B cell (primary cell): ENCODE measurements at regions of chr22 and their contacts with region 1.

Region 1: DNA sequence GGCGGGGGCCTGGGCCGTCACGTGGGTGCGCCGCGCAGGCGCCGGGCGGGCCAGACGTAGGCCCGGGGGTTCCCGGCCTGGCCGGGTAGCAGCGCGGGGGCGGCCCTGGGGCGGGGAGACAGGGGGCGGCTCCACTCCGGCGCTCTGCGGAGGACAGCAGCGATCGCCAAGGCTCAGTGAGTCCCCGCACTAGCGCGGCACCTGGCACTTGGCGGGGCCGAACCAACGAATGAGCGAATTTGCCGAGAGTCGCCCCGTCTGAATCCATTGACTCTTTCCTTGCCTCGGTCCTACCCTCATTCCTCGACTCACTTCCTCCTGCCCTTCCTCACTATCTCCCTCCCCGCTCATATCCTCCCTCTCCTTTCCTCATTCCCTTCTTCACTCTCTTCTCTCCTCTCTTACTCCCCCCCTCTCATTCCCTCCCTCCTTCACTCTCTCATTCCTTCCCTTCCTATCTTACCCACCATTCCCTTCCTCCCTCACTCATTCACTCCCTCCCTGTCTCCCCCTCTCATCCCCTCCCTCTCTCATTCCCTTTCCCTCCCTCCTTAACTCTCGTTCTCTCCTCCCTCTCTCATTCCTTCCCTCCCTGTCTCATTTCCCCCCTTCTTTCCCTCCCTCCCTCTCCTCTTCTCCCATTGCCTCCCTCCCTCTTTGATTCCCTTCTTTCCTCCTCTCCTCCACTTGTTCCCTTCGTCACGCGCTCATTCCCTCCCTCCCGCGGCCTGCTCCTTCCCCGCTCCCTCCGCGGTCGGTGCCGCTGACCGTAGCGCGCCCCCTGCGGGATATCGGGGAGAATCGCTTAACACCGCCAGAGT is 476 bp upstream of the KLHL22 start:
- DNase-seq: peak; percentile 96
- ATAC-seq: peak; percentile 96
- H3K4me3 ChIP-seq: peak overlapping the region; percentile 75 to 85 (median 76)
- H3K4me3 Mint-ChIP-seq: peak overlapping the region; percentile 97
- H3K27ac ChIP-seq: peak overlapping the region; percentile 96 to 98
- H3K27ac Mint-ChIP-seq: peak overlapping the region; percentile 95
- H3K4me1 ChIP-seq: peaks cover 10 to 23% of the 10 kb centered on the region in 2 donors
- H3K4me1 Mint-ChIP-seq: peaks cover 26% of the 10 kb centered on the region
- H3K27me3 ChIP-seq: no peaks in the 10 kb centered on the region
- H3K27me3 Mint-ChIP-seq: no peaks in the 10 kb centered on the region
- CTCF ChIP-seq: peak; percentile 91

Region 2: DNA sequence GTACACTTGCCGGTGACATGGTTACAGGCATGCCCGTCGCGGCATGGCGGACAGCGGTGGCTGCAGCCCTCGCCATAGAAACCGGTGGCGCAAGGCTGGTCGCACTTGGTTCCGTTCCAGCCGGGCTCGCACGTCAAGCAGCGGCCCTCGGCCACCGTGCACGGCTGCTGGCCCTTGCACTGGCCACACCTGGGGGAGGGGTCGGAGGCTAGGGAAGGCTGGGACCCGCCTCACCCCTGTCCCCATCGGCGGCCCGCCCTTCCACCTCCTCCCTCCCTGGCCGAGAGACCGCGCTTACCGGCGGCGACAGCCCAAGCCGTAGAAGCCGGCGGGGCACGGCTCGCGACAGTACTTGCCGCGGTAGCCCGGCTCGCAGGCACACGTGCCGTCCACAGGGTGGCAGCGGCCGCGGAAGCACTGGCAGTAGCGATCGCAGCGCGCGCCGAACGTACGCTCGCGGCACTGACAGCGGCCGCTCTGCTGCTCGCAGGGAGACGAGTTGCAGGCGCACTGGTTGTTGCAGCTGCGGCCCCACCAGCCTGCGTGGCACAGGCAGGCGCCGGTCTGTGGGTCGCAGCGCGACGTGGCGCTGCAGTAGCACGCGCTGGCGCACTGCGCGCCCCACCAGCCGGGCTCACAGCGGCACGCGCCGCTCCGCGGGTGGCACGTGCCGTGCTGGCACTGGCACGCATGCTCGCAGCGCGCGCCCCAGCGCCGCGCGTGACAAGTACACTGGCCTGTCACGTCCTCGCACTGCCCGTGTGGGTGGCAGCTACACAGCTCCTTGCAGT is 65.2 kb before region 1 on chr22:
- CTCF ChIA-PET with region 1: interaction called, 3 read pairs
- POLR2A ChIA-PET with region 1: no interaction called
- intact Hi-C with region 1: loop called (anchors 1 kb)
- DNase-seq: peak; percentile 78
- ATAC-seq: peak; percentile 56
- H3K4me3 ChIP-seq: peak overlapping the region in 4 of 5 experiments; percentile 47 to 80 (median 67)
- H3K4me3 Mint-ChIP-seq: peak overlapping the region; percentile 90
- H3K27ac ChIP-seq: no peak overlapping the region
- H3K27ac Mint-ChIP-seq: no peak overlapping the region
- H3K4me1 ChIP-seq: peaks cover 36 to 49% of the 10 kb centered on the region in 2 donors
- H3K4me1 Mint-ChIP-seq: peaks cover 32% of the 10 kb centered on the region
- H3K27me3 ChIP-seq: peaks cover 0 to 90% (median 41%) of the 10 kb centered on the region in 4 experiments
- H3K27me3 Mint-ChIP-seq: peaks cover 62% of the 10 kb centered on the region
- CTCF ChIP-seq: peak; percentile 39

Region 3: DNA sequence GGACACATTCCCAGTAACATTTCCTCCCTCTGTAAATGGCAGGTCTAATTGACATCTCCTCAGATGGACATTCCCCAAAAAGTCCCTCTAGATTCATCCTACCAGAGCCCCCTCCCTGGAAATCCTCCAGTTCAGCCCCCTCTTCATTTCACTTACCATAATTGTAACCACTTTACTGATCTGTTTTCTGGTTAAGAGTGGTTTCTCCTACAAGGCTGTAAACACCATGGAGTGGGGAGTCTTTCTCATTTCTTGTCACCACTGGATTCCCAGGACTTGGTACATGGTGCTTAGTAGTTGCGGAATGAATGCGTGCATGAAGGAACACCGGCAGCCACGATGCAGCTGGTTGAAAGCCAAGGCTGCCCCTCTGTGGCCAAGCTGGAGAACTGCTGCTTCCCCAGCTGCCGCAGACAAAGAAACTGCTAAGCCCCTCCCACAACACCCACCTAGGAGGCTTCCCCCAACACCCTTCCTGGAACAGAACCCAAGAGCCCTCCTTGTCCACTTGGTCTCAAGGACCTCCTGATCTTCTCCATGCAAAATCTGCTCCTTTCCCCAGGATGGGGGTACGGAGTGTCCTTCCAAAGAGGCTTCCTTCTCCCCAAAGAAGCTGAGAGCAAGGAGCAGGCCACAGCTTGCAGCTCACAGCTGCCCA is 39.9 kb before region 1 on chr22:
- CTCF ChIA-PET with region 1: interaction called, 12 read pairs
- POLR2A ChIA-PET with region 1: no interaction called
- intact Hi-C with region 1: no loop called
- DNase-seq: peak; percentile 84
- ATAC-seq: peak; percentile 100
- H3K4me3 ChIP-seq: no peak overlapping the region
- H3K4me3 Mint-ChIP-seq: no peak overlapping the region
- H3K27ac ChIP-seq: no peak overlapping the region
- H3K27ac Mint-ChIP-seq: peak overlapping the region; percentile 59
- H3K4me1 ChIP-seq: peaks cover 10% of the 10 kb centered on the region in 2 donors
- H3K4me1 Mint-ChIP-seq: peaks cover 22% of the 10 kb centered on the region
- H3K27me3 ChIP-seq: no peaks in the 10 kb centered on the region
- H3K27me3 Mint-ChIP-seq: no peaks in the 10 kb centered on the region
- CTCF ChIP-seq: peak; percentile 85

Region 4: GRCh38 chr22:20507253-20508066 is 11.4 kb after region 1 on chr22 and contains the start of gene MED15:
- CTCF ChIA-PET with region 1: no interaction called
- POLR2A ChIA-PET with region 1: interaction called, 4 read pairs
- intact Hi-C with region 1: loop called (anchors 1 kb)
- DNase-seq: peak; percentile 92
- ATAC-seq: peak; percentile 85
- H3K4me3 ChIP-seq: peak within 1 kb of the TSS; percentile 77 to 97 (median 87)
- H3K4me3 Mint-ChIP-seq: peak within 1 kb of the TSS; percentile 97
- H3K27ac ChIP-seq: peak within 1 kb of the TSS; percentile 87 to 96
- H3K27ac Mint-ChIP-seq: peak within 1 kb of the TSS; percentile 99
- H3K4me1 ChIP-seq: peaks cover 32 to 39% of the 10 kb centered on the region in 2 donors
- H3K4me1 Mint-ChIP-seq: peaks cover 51% of the 10 kb centered on the region
- H3K27me3 ChIP-seq: no peaks in the 10 kb centered on the region
- H3K27me3 Mint-ChIP-seq: no peaks in the 10 kb centered on the region
- CTCF ChIP-seq: no peak
- total RNA-seq, gene MED15: 134 and 156 TPM in 2 replicates

Region 5: GRCh38 chr22:20803696-20804324 is 307.7 kb after region 1 on chr22:
- CTCF ChIA-PET with region 1: no interaction called
- POLR2A ChIA-PET with region 1: no interaction called
- intact Hi-C with region 1: no loop called
- DNase-seq: peak; percentile 22
- ATAC-seq: peak; percentile 17
- H3K4me3 ChIP-seq: no peak overlapping the region
- H3K4me3 Mint-ChIP-seq: no peak overlapping the region
- H3K27ac ChIP-seq: no peak overlapping the region
- H3K27ac Mint-ChIP-seq: no peak overlapping the region
- H3K4me1 ChIP-seq: peaks cover 0 to under 1% of the 10 kb centered on the region in 2 donors
- H3K4me1 Mint-ChIP-seq: peaks cover 2% of the 10 kb centered on the region
- H3K27me3 ChIP-seq: no peaks in the 10 kb centered on the region
- H3K27me3 Mint-ChIP-seq: no peaks in the 10 kb centered on the region
- CTCF ChIP-seq: peak; percentile 11